BJ (cell line): ENCODE measurements at regions of chr22 and their contacts with region 1.

Region 1: GRCh38 chr22:38941488-38941987 is 15.9 kb upstream of the APOBEC3A start:
- DNase-seq: no peak
- H3K4me3 ChIP-seq: no peak overlapping the region
- H3K27me3 ChIP-seq: peaks cover 18% of the 10 kb centered on the region
- CTCF ChIP-seq: no peak

Region 2: DNA sequence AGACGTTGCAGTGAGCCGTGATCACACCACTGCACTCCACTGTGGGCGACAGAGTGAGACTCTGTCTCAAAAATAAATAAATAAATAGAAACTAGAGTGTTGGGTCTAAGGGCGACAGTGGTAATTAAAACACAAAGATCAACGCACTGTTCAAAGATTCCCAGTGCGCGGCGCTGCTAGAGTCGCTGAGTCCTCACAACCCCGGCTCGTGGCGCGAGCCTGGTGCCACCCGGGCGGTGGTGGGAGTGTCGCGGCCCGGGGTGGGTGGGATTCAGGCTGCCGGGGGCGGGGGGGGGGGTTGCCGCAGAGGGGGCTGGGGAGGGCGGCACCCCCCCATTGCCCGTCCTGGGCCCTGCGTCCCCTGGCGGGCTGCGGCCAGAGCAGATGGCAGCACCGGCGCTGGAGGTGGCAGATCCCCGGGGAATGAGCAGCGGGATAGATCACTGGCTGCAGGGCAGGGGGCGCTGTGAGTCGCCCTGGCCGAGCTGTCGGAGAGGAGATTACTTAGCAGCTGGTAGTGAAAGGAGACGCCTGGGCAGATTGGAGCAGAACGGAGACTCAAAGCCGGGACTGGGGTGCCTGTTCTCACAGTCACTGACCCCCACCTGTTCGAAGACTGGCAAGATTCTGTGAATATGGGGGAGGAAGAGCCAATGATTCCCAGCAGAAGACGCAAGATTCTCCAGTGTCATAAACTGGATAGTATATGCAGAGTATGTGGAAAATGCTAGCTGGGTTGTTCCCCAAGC is 14.3 kb before region 1 on chr22:
- CTCF ChIA-PET with region 1: interaction called, 11 read pairs
- POLR2A ChIA-PET with region 1: no interaction called
- DNase-seq: no peak
- H3K4me3 ChIP-seq: peak overlapping the region; percentile 18
- H3K27me3 ChIP-seq: peaks cover 2% of the 10 kb centered on the region; the same call in 1 of the 2 replicates
- CTCF ChIP-seq: peak; percentile 88

Region 3: GRCh38 chr22:39039306-39040126 is 98.0 kb after region 1 on chr22:
- CTCF ChIA-PET with region 1: no interaction called
- POLR2A ChIA-PET with region 1: no interaction called
- DNase-seq: no peak
- H3K4me3 ChIP-seq: no peak overlapping the region
- H3K27me3 ChIP-seq: no peaks in the 10 kb centered on the region
- CTCF ChIP-seq: no peak